Astrocyte of the cerebellum (primary cell): ENCODE measurements at regions of chr19 and their contacts with region 1.

Region 1: GRCh38 chr19:9507285-9507684 is 8.9 kb upstream of the ZNF560 start:
- DNase-seq: no peak
- H3K4me3 ChIP-seq: no peak overlapping the region
- CTCF ChIP-seq: no peak

Region 2: DNA sequence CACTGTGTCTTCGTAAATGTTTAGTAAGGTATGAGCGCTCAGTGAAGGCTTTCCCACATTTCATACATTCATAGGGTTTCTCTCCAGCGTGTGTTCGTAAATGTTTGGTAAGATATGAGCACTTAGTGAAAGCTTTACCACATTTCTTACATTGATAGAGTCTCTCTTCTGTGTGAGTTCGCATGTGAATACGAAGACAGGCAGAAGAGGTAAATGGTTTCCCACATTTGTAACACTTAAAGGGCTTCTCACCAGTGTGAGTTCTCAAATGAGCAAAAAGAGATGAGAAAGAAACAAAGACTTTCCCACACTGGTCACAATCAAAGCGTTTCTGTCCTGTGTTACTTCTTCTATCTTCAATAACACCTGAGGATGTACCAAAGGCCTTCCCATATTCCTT is 40.1 kb before region 1 on chr19:
- in situ Hi-C with region 1: loop called (anchors 5 kb)
- DNase-seq: no peak
- H3K4me3 ChIP-seq: no peak overlapping the region
- CTCF ChIP-seq: no peak

Region 3: GRCh38 chr19:9538183-9539058 is 31.1 kb after region 1 on chr19 and contains the start of gene ZNF426:
- in situ Hi-C with region 1: no loop called
- DNase-seq: peak; percentile 80
- H3K4me3 ChIP-seq: peak within 1 kb of the TSS; percentile 73
- CTCF ChIP-seq: no peak